ENCODE measurements at regions of chr1 and their contacts with region 1.

Region 1: GRCh38 chr1:112706908-112707663 is at the start of gene RHOC:
- DNase-seq: peak; percentile 89
- ATAC-seq: peak; percentile 61
- H3K4me3 ChIP-seq: peak within 1 kb of the TSS; percentile 97
- H3K27ac ChIP-seq: peak within 1 kb of the TSS; percentile 97
- H3K4me1 ChIP-seq: peaks cover 40% of the 10 kb centered on the region
- H3K27me3 ChIP-seq: no peaks in the 10 kb centered on the region
- CTCF ChIP-seq: peak; percentile 86
- total RNA-seq, gene RHOC: 399 and 405 TPM in 2 replicates

Region 2: DNA sequence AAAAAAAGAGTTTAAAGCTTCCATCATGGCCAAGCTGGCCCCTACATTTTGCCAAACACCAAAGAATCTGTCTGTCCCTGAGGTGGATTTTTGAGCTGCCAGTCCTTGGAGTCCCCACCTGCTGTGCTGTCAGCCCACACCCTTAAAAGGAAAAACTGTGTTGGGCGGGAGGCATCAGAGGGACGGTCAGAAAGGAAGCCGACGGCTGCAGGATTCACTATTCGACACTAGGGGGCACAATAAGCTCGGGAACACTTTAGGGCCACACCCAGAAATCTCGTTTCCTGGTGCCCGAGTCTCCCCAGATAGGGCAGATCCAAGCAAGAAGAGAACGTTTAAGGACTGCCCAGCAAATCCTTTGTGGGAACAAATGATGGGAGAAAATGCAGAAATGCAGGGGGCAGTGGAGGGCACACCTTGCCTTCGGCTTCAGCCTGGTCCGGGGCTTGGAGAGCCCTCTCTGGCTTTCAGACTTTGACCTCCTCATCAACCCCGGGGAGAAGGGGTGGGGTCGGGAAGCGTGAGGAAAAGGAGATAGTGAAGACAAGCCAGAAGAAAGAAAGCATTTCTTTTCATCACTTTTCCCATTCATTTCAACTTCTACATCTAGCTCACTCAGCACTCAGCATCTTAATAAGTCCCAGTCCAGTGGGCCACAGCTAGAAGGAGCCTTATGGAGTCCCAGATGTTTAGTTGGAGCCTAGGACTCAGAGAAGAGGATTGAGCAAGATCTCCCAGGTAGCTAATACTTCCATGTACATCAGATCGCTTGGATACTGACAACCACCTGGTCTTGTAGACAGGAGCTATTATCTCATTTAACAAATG is 316.1 kb before region 1 on chr1:
- CTCF ChIA-PET with region 1: interaction called, 3 read pairs
- POLR2A ChIA-PET with region 1: no interaction called
- intact Hi-C with region 1: loop called (anchors 1 kb)
- DNase-seq: peak; percentile 98
- ATAC-seq: peak; percentile 58
- H3K4me3 ChIP-seq: peak overlapping the region; percentile 74
- H3K27ac ChIP-seq: peak overlapping the region; percentile 34
- H3K4me1 ChIP-seq: peaks cover 32% of the 10 kb centered on the region
- H3K27me3 ChIP-seq: no peaks in the 10 kb centered on the region
- CTCF ChIP-seq: peak; percentile 94

Region 3: DNA sequence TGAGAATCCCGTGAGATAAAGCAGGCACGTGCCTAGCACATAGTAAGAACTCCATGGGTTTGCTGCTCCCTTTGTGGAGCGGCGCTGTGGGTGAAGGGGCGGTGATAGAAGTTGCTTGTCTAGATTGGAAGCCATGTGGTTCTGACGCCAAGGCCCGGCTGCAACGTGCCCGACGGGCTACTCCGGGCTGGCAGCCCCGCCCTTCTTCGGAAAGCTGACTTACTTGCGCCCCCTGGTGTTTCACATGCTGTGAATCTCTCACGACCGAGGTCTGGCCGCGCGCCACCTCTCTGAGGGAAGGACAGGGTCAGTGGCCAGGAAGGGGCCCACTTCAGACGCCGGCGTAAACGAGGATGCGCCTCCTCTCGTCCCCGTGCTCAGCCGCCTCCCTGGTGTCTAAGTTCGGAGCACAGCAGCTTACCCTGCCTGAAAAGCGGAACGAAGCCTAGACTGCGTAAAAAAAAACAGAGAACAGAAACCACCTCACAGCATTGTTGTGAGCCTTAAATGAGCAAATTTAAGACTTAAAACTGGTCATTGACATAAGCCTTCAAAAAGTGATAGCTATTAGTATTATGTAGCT is 240.9 kb before region 1 on chr1:
- CTCF ChIA-PET with region 1: no interaction called
- POLR2A ChIA-PET with region 1: no interaction called
- intact Hi-C with region 1: loop called (anchors 2 kb)
- DNase-seq: peak; percentile 94
- ATAC-seq: peak; percentile 87
- H3K4me3 ChIP-seq: peak overlapping the region; percentile 62
- H3K27ac ChIP-seq: peak overlapping the region; percentile 18
- H3K4me1 ChIP-seq: peaks cover 21% of the 10 kb centered on the region
- H3K27me3 ChIP-seq: no peaks in the 10 kb centered on the region
- CTCF ChIP-seq: peak; percentile 88

Region 4: GRCh38 chr1:112501810-112502641 is 205.1 kb before region 1 on chr1:
- CTCF ChIA-PET with region 1: interaction called, 5 read pairs
- POLR2A ChIA-PET with region 1: no interaction called
- intact Hi-C with region 1: loop called (anchors 5 kb)
- DNase-seq: peak; percentile 64
- ATAC-seq: peak; percentile 85
- H3K4me3 ChIP-seq: peak overlapping the region; percentile 73
- H3K27ac ChIP-seq: no peak overlapping the region
- H3K4me1 ChIP-seq: no peaks in the 10 kb centered on the region; the same call in 1 of the 2 replicates
- H3K27me3 ChIP-seq: no peaks in the 10 kb centered on the region
- CTCF ChIP-seq: peak; percentile 74

Region 5: GRCh38 chr1:112619520-112620376 is 87.3 kb before region 1 on chr1 and contains the start of gene CAPZA1:
- CTCF ChIA-PET with region 1: no interaction called
- POLR2A ChIA-PET with region 1: no interaction called
- intact Hi-C with region 1: loop called (anchors 1 kb)
- DNase-seq: peak; percentile 90
- ATAC-seq: peak; percentile 85
- H3K4me3 ChIP-seq: peak within 1 kb of the TSS; percentile 90
- H3K27ac ChIP-seq: peak within 1 kb of the TSS; percentile 93
- H3K4me1 ChIP-seq: peaks cover 22% of the 10 kb centered on the region
- H3K27me3 ChIP-seq: no peaks in the 10 kb centered on the region
- CTCF ChIP-seq: no peak
- total RNA-seq, gene CAPZA1: 177 and 273 TPM in 2 replicates

Region 6: DNA sequence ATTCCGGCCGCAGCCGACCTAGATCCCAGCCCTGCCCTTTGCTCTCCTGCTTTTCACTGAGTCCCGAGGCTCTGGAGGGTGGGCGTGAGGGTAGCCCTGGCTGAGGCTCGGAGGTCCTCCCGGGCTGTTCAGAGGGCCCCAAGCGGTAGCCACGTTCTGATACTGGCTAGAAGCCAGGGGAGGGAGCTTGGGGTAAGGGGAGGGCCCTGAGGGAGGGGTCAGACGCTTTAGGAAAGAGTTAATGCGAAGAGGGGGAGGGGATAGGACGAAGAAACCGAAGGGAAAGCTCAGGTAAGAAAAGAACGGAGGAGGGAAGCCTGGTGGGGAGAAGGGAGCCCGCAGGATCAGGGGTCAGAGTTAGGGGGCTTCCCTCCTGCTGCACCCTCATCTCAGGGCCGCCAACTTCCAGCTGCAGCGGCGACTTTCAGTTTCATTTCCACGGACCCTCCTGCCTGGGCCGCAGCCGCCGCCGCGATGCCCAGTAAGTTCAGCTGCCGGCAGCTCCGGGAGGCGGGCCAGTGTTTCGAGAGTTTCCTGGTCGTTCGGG is 32.6 kb before region 1 on chr1 and contains the start of gene MOV10:
- CTCF ChIA-PET with region 1: interaction called, 7 read pairs
- POLR2A ChIA-PET with region 1: interaction called, 4 read pairs
- intact Hi-C with region 1: loop called (anchors 1 kb)
- DNase-seq: peak; percentile 75
- ATAC-seq: peak; percentile 57
- H3K4me3 ChIP-seq: peak within 1 kb of the TSS; percentile 99
- H3K27ac ChIP-seq: peak within 1 kb of the TSS; percentile 53
- H3K4me1 ChIP-seq: peaks cover 24% of the 10 kb centered on the region
- H3K27me3 ChIP-seq: no peaks in the 10 kb centered on the region
- CTCF ChIP-seq: no peak
- total RNA-seq, gene MOV10: 68.5 and 71.6 TPM in 2 replicates

Region 7: DNA sequence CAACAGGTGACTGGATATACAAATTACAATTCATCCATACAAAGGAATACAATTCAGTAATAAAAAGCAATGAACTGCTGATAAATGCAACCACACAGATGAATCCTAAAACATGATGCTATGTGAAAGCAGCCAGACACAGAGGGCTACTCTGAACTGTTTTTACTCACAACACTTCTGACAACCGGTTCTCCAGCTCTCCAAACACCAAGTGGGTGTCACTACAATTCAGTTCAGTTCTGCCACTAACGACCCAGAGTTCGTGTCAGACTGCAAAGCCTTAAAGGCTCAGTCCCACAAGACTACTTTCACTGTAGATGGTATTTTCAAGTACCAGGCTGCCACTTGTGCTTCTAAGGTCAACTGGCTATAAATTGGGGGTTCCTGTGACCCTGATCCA is 129.6 kb after region 1 on chr1:
- CTCF ChIA-PET with region 1: no interaction called
- POLR2A ChIA-PET with region 1: no interaction called
- intact Hi-C with region 1: no loop called
- DNase-seq: no peak
- ATAC-seq: peak; percentile 14; the same call in 1 of the 2 replicates
- H3K4me3 ChIP-seq: no peak overlapping the region
- H3K27ac ChIP-seq: no peak overlapping the region
- H3K4me1 ChIP-seq: peaks cover 30% of the 10 kb centered on the region
- H3K27me3 ChIP-seq: no peaks in the 10 kb centered on the region
- CTCF ChIP-seq: no peak